ENCODE measurements at regions of chr1 and their contacts with region 1.

Region 1: DNA sequence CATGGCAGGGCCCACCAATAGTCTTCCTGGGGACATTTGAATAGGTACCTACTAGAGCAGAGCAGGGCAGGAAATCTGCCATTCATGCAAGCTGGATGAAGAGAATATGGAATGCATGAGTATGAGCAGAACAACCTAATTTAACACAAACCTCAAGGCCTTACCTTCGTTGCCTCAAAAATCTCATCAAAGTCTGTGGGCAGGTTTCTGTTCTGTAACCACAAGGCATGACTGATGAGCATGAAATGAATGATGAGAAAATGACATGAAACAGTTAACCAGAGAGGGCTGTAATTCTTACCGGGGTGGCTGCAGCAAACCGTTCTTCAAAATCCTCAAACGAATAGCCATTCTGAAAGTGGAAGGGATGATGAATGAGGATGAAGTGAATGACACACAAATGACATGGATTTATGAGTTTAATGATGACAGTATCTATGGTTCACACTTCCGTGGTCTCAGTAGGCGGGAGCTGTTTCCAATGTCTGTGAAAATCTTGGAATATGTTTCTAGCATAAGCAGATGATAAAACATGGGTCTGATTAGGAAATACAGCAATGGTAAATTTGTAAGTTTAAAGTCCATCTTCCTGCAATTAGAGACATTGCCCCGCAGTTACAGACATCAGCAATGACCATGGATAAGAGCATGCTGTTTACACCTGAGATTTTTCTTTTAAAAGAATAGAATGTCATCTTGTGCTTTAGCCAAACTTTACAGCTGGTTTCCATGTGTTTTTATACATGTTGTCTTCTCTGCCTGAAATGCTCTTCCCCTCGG is 67.6 kb upstream of the C8B start:
- DNase-seq: no peak
- ATAC-seq: no peak

Region 2: DNA sequence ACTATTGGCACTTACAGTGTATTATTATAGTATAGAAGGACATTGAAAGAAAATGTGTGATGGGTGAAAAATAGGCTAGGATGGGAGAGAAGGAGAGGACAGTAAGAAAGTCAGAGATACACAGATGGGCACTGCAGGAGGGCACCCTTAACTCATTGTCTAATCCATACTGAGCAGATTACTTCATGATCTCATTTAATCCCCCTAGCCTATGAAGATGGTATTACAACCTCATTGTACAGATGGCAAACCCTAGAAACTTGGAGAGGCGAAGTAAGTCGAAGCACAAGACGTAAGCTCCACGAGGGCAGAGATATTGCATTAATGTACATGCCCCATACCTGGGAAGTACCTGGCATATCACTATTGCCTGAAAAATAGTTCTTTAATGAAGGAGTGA is 737.4 kb after region 1 on chr1:
- intact Hi-C with region 1: loop called (anchors 5 kb)
- DNase-seq: no peak
- ATAC-seq: no peak

Measured in Right ventricle myocardium inferior (tissue), 1 donor.